Right cardiac atrium (tissue), 5 donors: ENCODE measurements at regions of chr2 and their contacts with region 1.

Region 1: DNA sequence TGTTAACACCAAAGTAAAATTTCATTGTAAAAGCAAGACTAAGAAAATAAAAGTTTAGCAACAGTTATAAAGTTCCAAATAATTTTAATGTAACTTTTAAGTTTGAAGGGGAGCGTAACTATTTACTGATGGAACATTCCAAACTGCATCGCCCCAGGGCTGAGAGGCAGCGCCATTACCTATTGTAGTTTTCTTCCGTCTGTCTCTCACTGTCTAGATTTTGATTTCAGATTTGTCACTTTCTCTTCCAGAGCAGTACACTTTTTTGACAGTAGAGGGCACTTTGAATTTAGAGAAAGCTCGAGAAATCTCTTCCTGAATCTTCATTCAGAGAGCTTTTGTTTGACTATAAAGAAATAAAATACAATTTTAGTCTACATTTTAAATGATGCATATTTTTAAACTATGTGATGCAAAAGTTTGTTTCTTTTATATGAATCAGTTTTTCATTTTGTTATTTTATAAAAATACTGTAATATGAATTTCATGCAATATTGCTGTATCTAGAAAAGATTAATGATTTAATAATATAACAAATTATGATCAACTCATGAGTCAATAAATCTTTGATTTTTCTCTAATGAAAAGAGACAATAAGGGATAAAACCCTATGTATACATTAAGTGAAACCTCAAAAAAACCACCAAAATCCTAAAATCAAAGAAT is 389.8 kb downstream of the FIGN start:
- DNase-seq: no peak
- ATAC-seq: no peak
- H3K4me3 ChIP-seq: no peak overlapping the region
- H3K27ac ChIP-seq: no peak overlapping the region
- H3K4me1 ChIP-seq: no peaks in the 10 kb centered on the region
- H3K27me3 ChIP-seq: no peaks in the 10 kb centered on the region

Region 2: GRCh38 chr2:163735685-163736432 is 389.8 kb after region 1 on chr2 and contains the start of gene FIGN:
- intact Hi-C with region 1: loop called in 1 of 4 experiments (anchors 10 kb)
- DNase-seq: peak; percentile 82 to 93 (median 92)
- ATAC-seq: peak; percentile 90 to 92
- H3K4me3 ChIP-seq: peak within 1 kb of the TSS; percentile 98
- H3K27ac ChIP-seq: peak within 1 kb of the TSS; percentile 99
- H3K4me1 ChIP-seq: no peaks in the 10 kb centered on the region
- H3K27me3 ChIP-seq: no peaks in the 10 kb centered on the region
- total RNA-seq, gene FIGN: 9.5 to 13.8 (median 11.6) TPM

Region 3: DNA sequence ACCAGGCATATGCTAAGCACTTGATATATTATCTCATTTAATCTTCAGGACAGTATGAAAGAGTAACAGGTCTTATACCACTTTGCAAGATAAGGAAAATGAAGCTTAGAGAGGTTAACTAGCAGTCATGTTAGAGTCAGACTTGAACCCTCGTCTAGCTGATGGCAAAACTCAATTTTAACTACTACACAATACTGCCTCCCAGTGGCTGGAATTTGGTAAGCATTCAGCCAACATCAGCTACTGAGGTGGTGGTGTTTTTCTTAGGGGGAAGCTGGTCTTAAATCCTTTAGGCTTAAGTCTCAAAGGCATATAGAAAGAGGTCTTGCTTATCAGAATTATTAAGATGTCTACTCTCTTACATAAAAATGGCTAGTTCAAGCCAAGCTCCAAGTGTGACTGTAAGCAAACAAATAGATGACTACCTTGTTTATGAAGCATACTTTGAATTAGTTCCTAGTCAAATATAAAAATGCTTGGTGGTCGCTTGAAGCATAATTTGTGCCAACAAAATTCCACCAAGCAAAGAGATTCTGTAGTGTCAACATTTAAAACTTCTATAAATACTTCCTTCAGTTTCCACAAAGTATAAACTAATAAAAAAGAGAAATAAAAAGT is 715.2 kb after region 1 on chr2:
- intact Hi-C with region 1: loop called in 1 of 4 experiments (anchors 10 kb)
- DNase-seq: peak in 1 of 3 donors; percentile 20
- ATAC-seq: no peak
- H3K4me3 ChIP-seq: no peak overlapping the region
- H3K27ac ChIP-seq: no peak overlapping the region
- H3K4me1 ChIP-seq: no peaks in the 10 kb centered on the region
- H3K27me3 ChIP-seq: no peaks in the 10 kb centered on the region

Region 4: GRCh38 chr2:164420786-164421185 is 1074.7 kb after region 1 on chr2:
- intact Hi-C with region 1: loop called in 1 of 4 experiments (anchors 10 kb)
- DNase-seq: no peak
- ATAC-seq: no peak
- H3K4me3 ChIP-seq: no peak overlapping the region
- H3K27ac ChIP-seq: no peak overlapping the region
- H3K4me1 ChIP-seq: no peaks in the 10 kb centered on the region
- H3K27me3 ChIP-seq: no peaks in the 10 kb centered on the region

Region 5: GRCh38 chr2:164430166-164430783 is 1084.2 kb after region 1 on chr2:
- intact Hi-C with region 1: loop called in 2 of 4 experiments (anchors 10 kb)
- DNase-seq: no peak
- ATAC-seq: no peak
- H3K4me3 ChIP-seq: no peak overlapping the region
- H3K27ac ChIP-seq: no peak overlapping the region
- H3K4me1 ChIP-seq: no peaks in the 10 kb centered on the region
- H3K27me3 ChIP-seq: no peaks in the 10 kb centered on the region